Activated CD8-positive, alpha-beta T cell treated with anti-CD3 and anti-CD28 coated beads for 36 hours (primary cell): ENCODE measurements at regions of chr16 and their contacts with region 1.

Region 1: GRCh38 chr16:2473999-2474876 is 689 bp upstream of the TBC1D24 start:
- DNase-seq: peak; percentile 62
- ATAC-seq: peak; percentile 44
- H3K4me3 Mint-ChIP-seq: peak overlapping the region; percentile 76
- H3K27ac Mint-ChIP-seq: peak overlapping the region; percentile 72
- H3K4me1 Mint-ChIP-seq: peaks cover 25% of the 10 kb centered on the region
- H3K27me3 Mint-ChIP-seq: peaks cover 22% of the 10 kb centered on the region
- CTCF ChIP-seq: peak; percentile 34

Region 2: DNA sequence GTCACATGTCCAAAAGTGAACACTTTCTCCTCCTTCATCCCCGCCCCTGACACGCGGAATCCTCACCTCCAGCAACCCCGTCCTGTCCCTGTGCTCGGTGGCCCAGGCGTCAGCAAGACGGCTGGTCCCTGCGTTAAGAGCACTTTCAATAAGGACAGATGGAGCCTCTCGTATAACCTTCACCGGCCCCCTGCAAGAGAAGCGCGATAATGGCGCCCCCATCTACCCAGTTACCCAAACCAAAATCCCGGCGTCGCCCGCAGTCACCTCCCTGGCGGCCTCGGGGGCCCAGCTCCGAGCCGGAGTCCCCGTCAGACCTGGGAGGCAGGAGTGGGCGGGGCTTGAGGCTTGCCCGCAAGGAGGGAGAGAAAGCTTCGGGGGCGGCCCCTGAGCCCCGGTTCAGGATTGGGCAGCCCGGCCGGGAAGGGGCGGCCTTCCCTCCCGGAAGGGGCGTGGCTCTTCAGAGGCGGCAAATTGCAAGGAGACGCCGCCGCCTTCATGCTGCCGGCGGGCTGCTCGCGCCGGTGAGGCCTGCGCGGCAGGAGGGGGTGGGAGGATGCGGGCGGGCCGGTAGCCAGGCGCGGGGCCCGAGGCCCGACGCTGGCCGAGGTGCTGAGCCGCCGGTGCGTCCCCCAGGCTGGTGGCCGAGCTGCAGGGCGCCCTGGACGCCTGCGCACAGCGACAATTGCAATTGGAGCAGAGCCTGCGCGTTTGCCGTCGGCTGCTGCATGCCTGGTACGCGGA is 14.4 kb before region 1 on chr16 and contains the start of gene TEDC2:
- CTCF ChIA-PET with region 1: interaction called, 4 read pairs
- POLR2A ChIA-PET with region 1: interaction called, 19 read pairs
- intact Hi-C with region 1: no loop called
- DNase-seq: peak; percentile 99
- ATAC-seq: peak; percentile 99
- H3K4me3 Mint-ChIP-seq: peak within 1 kb of the TSS; percentile 73
- H3K27ac Mint-ChIP-seq: peak within 1 kb of the TSS; percentile 66
- H3K4me1 Mint-ChIP-seq: peaks cover 8% of the 10 kb centered on the region
- H3K27me3 Mint-ChIP-seq: no peaks in the 10 kb centered on the region
- CTCF ChIP-seq: no peak
- total RNA-seq, gene TEDC2: 23.2 to 30.7 TPM

Region 3: DNA sequence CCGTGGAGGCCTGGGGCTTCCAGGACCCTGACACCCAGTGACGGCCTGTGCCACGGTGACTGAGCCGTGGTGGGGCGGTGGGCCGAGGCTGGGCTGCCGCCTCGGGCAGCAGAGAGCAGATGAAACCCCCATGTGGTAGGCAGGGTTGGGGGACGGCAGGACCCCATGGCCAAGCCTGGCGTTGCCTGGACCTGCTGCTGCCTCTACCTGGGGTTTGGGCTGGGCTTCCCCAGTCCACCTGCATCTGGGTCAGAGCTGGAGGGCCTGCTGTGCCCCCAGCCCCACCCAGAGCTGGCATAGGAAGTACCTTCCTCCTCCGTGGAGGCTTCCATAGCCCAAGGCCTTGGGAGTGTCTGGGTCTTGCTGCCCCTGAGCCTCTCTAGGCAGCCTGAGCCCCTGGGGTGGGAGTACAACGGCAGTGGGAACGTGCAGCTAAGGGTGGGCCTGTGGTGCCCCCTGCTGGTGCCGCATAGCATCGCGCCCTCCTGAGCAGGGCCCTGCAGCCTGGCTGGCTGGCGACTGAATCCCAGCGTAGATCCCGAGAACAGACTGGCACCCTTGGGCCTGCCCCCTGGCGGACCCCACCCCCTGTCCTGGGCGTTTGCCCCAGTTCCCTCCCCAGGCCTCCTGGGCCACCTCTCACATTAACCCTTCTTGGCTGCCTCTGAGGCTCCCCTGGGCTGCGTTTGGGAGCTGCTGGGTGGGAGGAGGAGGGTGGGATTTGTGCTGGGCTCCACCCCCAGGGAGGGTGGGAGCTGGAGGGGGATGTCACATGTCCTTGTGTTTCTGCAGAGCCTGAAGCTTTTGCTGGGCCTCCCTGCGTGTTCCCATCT is 26.9 kb after region 1 on chr16:
- CTCF ChIA-PET with region 1: interaction called, 10 read pairs
- POLR2A ChIA-PET with region 1: no interaction called
- intact Hi-C with region 1: no loop called
- DNase-seq: peak; percentile 87
- ATAC-seq: peak; percentile 99
- H3K4me3 Mint-ChIP-seq: no peak overlapping the region
- H3K27ac Mint-ChIP-seq: no peak overlapping the region
- H3K4me1 Mint-ChIP-seq: no peaks in the 10 kb centered on the region
- H3K27me3 Mint-ChIP-seq: no peaks in the 10 kb centered on the region
- CTCF ChIP-seq: peak; percentile 89